HAP-1 (cell line): ENCODE measurements at regions of chr1 and their contacts with region 1.

Region 1: DNA sequence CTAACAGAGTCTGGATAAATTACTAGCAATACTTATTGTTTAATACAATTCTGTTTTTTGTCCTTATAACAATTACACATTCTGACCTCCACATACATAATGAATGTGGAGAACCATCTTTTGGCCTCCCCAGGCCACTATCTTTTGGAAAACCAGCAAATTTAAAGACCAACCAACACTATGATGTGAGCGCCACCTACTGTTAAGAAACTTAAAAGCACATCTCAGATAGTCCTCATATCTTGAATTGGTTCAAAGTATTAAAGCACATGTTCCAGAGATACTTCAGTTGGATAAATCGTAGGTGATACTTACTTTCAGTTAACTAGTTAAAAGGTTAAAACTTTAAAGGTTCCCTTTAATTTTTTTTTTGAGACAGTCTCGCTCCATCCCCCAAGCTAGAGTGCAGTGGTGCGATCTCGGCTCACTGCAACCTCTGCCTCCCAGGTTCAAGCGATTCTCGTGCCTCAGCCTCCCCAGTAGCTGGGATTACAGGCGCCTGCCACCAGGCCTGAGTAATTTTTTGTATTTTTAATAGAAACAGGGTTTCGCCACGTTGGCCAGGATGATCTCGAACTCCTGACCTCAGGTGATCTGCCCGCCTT is 29.3 kb upstream of the USP1 start:
- DNase-seq: peak; percentile 48 to 54
- H3K4me3 ChIP-seq: no peak overlapping the region
- H3K4me1 ChIP-seq: no peaks in the 10 kb centered on the region
- H3K27me3 ChIP-seq: no peaks in the 10 kb centered on the region

Region 2: GRCh38 chr1:62175568-62176179 is 231.8 kb before region 1 on chr1:
- in situ Hi-C with region 1: loop called (anchors 5 kb)
- DNase-seq: peak; percentile 64 to 76
- H3K4me3 ChIP-seq: no peak overlapping the region
- H3K4me1 ChIP-seq: peaks cover 3% of the 10 kb centered on the region
- H3K27me3 ChIP-seq: no peaks in the 10 kb centered on the region

Region 3: DNA sequence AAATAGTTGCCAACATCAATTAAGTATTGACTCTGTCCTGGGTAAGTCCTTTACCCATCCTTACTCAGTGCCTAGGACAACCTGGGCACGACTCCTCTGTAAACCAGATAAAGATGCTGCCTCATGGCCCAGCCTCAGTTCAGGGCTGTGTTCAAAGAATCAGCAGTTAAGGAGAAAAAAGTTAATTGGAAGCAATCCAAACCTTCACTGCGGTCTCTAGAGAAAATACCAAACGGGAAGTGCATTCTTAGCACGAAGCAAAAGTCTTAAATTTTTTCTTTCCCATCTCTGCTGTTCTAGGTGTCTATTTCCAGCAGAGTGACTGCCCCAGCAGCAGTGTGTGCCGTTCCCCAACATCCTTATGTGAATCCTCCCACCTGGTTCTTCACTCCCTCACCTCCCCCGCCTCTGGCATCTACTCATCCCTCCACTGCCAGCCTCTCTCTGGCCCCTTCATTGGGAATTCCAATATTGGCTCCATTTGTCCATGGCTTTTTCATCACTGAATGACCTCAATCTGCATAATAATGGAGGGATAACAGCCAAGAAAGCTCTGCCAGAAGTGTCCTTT is 111.5 kb before region 1 on chr1:
- in situ Hi-C with region 1: loop called (anchors 10 kb)
- DNase-seq: peak; percentile 83 to 84
- H3K4me3 ChIP-seq: no peak overlapping the region
- H3K4me1 ChIP-seq: peaks cover 24% of the 10 kb centered on the region
- H3K27me3 ChIP-seq: no peaks in the 10 kb centered on the region